Posterior vena cava (tissue), 2 donors: ENCODE measurements at regions of chr4 and their contacts with region 1.

Region 1: GRCh38 chr4:156322592-156322991 is 368.9 kb upstream of the CTSO start:
- DNase-seq: no peak

Region 2: DNA sequence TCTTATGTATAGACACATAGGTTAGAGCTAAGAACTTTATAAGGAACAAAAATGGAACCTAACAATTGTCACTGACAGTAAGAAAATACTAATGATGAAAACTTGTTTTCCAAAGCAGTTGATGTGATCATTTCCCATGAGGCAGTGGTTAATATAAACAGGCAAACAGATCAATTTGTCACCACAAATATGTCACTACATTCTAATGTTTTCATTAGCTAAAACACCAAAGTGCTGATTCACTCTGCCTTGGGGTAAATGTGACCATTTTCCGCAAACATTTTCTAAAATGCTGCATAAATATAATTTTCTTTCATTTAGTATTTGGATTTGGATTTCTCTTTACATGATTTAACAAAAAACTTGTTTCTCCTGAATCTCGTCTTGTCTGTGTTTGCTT is 40.0 kb after region 1 on chr4:
- intact Hi-C with region 1: loop called in 1 of 2 experiments (anchors 2 kb)
- DNase-seq: no peak